Naive thymus-derived CD4-positive, alpha-beta T cell (primary cell): ENCODE measurements at regions of chr1 and their contacts with region 1.

Region 1: GRCh38 chr1:205396967-205397616 is 24.8 kb downstream of the LEMD1 start:
- DNase-seq: peak in 5 of 9 donors; percentile 14 to 32 (median 15)
- ATAC-seq: peak; percentile 37
- H3K4me3 ChIP-seq: no peak overlapping the region
- H3K4me3 Mint-ChIP-seq: no peak overlapping the region
- H3K27ac ChIP-seq: no peak overlapping the region
- H3K27ac Mint-ChIP-seq: no peak overlapping the region
- H3K4me1 ChIP-seq: no peaks in the 10 kb centered on the region
- H3K4me1 Mint-ChIP-seq: peaks cover 0 to 10% (median 0%) of the 10 kb centered on the region in 7 donors
- H3K27me3 ChIP-seq: no peaks in the 10 kb centered on the region
- H3K27me3 Mint-ChIP-seq: peaks cover 3 to 46% (median 14%) of the 10 kb centered on the region in 5 donors

Region 2: DNA sequence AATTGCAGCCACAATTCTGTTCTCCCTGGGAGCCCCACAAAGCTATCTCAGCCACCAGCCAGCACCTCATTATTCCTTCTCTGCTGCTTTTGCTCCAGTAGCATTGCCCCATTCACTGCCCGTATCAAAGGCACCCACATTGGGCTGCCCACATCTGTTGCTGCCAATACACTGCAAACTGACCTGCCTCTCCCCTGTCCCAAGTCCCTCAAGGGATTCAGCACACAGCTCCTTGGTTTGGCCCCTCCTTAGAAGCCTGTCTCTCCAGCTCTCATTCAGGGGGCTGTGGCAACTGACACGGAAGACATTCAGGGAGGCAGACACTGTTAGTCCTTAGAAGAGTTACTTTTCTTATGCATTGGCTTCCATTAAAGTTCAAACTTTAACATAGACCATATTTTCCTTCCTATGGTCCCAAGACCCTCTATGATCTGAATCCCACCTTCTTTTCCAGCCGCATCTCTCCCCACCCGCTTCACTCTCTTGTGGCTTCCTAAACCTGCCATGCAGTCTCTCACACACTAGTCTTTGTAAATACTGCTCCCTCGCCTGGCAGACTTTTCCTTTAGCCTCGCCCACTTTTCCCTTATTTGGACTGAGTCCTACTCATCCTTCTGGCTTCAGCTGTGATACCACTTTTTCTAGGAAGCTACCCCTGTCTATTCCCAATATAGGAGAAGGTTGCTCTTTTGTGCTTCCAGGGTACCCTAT is 21.1 kb before region 1 on chr1:
- CTCF ChIA-PET with region 1: no interaction called
- POLR2A ChIA-PET with region 1: no interaction called
- intact Hi-C with region 1: no loop called
- DNase-seq: no peak
- ATAC-seq: no peak
- H3K4me3 ChIP-seq: no peak overlapping the region
- H3K4me3 Mint-ChIP-seq: no peak overlapping the region
- H3K27ac ChIP-seq: no peak overlapping the region
- H3K27ac Mint-ChIP-seq: peak overlapping the region in 1 of 9 donors; percentile 3
- H3K4me1 ChIP-seq: peaks cover 6 to 13% of the 10 kb centered on the region in 2 donors
- H3K4me1 Mint-ChIP-seq: peaks cover 9 to 26% (median 20%) of the 10 kb centered on the region in 7 donors
- H3K27me3 ChIP-seq: no peaks in the 10 kb centered on the region
- H3K27me3 Mint-ChIP-seq: peaks cover 0 to 46% (median 22%) of the 10 kb centered on the region in 5 donors

Region 3: DNA sequence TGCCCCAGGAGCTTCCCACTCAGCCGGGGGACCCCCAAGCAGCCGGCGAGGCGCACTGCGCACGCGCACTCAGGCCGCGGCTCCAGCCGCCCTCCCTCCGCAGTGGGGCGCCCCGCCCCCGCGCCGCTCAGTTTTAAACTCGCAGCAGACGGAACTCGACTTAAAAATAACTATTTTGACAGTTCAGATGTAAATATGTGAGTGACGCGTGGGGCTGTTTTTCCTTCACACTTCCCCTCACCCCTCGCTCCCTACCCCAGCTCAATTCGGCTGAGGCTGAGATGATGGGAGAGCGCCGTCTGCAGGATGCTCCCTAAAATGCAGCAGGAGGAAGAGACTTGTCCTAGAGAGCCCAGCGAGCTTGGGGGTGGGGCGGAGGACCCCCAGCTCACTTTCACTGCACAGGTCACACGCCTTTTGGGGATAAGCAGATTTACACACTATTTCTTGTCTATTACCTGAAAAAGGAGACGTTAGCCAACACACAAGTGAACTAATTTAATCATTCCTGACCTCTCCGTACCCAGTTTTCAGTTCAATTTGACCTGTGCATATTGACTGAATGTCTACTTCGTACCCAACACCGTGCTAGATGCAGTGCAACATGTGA is 33.7 kb after region 1 on chr1:
- CTCF ChIA-PET with region 1: interaction called, 5 read pairs
- POLR2A ChIA-PET with region 1: no interaction called
- intact Hi-C with region 1: loop called (anchors 1 kb)
- DNase-seq: peak; percentile 21 to 59 (median 51)
- ATAC-seq: peak; percentile 79
- H3K4me3 ChIP-seq: peak overlapping the region; percentile 44
- H3K4me3 Mint-ChIP-seq: peak overlapping the region; percentile 75 to 92 (median 86)
- H3K27ac ChIP-seq: no peak overlapping the region
- H3K27ac Mint-ChIP-seq: peak overlapping the region in 7 of 9 donors; percentile 52 to 88 (median 63)
- H3K4me1 ChIP-seq: peaks cover 0 to 6% of the 10 kb centered on the region in 2 donors
- H3K4me1 Mint-ChIP-seq: peaks cover 12 to 15% (median 15%) of the 10 kb centered on the region in 7 donors
- H3K27me3 ChIP-seq: no peaks in the 10 kb centered on the region
- H3K27me3 Mint-ChIP-seq: peaks cover 18 to 49% (median 22%) of the 10 kb centered on the region in 5 donors

Region 4: GRCh38 chr1:205523891-205524793 is 127.0 kb after region 1 on chr1:
- CTCF ChIA-PET with region 1: interaction called, 23 read pairs
- POLR2A ChIA-PET with region 1: no interaction called
- intact Hi-C with region 1: loop called (anchors 1 kb)
- DNase-seq: peak; percentile 42 to 69 (median 62)
- ATAC-seq: peak; percentile 60
- H3K4me3 ChIP-seq: no peak overlapping the region
- H3K4me3 Mint-ChIP-seq: no peak overlapping the region
- H3K27ac ChIP-seq: no peak overlapping the region
- H3K27ac Mint-ChIP-seq: no peak overlapping the region
- H3K4me1 ChIP-seq: no peaks in the 10 kb centered on the region
- H3K4me1 Mint-ChIP-seq: peaks cover 0 to 3% (median 0%) of the 10 kb centered on the region in 7 donors
- H3K27me3 ChIP-seq: no peaks in the 10 kb centered on the region
- H3K27me3 Mint-ChIP-seq: peaks cover 0 to 4% (median 0%) of the 10 kb centered on the region in 5 donors